Prostate gland (tissue), 2 donors: ENCODE measurements at regions of chr19 and their contacts with region 1.

Region 1: GRCh38 chr19:40716655-40717324 is at the starts of genes COQ8B and ITPKC:
- DNase-seq: peak; percentile 99
- H3K4me3 ChIP-seq: peak within 1 kb of the TSS; percentile 79 to 85
- H3K27ac ChIP-seq: peak within 1 kb of the TSS; percentile 99 to 100
- H3K4me1 ChIP-seq: no peaks in the 10 kb centered on the region
- H3K27me3 ChIP-seq: no peaks in the 10 kb centered on the region
- CTCF ChIP-seq: peak in 2 of 4 experiments; percentile 49 to 54
- POLR2A ChIP-seq: peak; percentile 92
- total RNA-seq, gene COQ8B: 61.2 to 64.4 TPM
- total RNA-seq, gene ITPKC: 40.8 to 44.5 TPM

Region 2: DNA sequence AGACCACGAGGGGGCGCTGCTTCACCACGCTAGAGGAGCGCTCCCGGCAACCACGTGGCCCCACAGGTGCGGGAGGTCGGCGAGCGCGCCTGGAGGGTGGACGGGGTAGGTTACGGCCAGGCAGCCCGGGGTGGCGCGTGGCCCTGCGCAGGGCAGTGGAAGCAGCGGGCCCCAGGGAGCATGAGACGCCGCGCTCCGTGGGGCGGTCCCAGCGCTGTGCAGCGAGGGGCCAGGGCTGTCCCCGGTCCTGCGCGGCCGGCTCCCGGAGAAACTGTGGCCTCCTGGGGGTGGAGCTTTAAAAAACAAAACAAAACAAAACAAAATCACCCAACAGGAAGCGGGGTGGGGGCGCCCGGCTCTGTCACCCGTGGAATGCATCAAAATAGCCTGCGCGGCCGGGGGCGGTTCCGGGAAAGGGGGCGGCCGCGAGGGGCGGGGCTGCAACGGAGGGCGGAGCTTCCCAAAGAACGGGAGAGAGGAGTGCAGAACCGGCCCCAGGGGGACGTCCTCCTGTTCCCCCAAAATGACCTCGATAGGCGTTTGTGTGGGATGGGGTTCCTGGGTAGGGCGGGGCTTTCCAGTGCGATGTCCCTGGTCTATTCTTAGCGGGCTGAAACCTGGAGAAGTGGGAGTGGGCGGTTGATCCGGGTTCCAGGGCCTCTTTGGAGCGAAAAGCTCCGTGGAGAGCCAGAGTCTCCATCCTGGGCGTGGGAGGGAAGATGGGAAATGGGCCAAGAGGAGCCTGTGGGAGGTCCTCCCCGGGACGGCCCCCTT is 53.7 kb before region 1 on chr19:
- intact Hi-C with region 1: no loop called
- DNase-seq: peak; percentile 88
- H3K4me3 ChIP-seq: peak overlapping the region; percentile 65 to 69
- H3K27ac ChIP-seq: peak overlapping the region; percentile 73 to 81
- H3K4me1 ChIP-seq: no peaks in the 10 kb centered on the region
- H3K27me3 ChIP-seq: no peaks in the 10 kb centered on the region
- CTCF ChIP-seq: peak in 3 of 4 experiments; percentile 99
- POLR2A ChIP-seq: peak; percentile 43

Region 3: GRCh38 chr19:40750059-40750873 is 33.5 kb after region 1 on chr19 and contains the start of gene ACTMAP:
- intact Hi-C with region 1: loop called (anchors 1 kb)
- DNase-seq: peak; percentile 100
- H3K4me3 ChIP-seq: peak within 1 kb of the TSS; percentile 71 to 80
- H3K27ac ChIP-seq: peak within 1 kb of the TSS; percentile 94 to 98
- H3K4me1 ChIP-seq: peaks cover 9% of the 10 kb centered on the region
- H3K27me3 ChIP-seq: no peaks in the 10 kb centered on the region
- CTCF ChIP-seq: peak in 1 of 4 experiments; percentile 37
- POLR2A ChIP-seq: peak; percentile 90
- total RNA-seq, gene ACTMAP: 4.4 to 25.2 TPM

Region 4: DNA sequence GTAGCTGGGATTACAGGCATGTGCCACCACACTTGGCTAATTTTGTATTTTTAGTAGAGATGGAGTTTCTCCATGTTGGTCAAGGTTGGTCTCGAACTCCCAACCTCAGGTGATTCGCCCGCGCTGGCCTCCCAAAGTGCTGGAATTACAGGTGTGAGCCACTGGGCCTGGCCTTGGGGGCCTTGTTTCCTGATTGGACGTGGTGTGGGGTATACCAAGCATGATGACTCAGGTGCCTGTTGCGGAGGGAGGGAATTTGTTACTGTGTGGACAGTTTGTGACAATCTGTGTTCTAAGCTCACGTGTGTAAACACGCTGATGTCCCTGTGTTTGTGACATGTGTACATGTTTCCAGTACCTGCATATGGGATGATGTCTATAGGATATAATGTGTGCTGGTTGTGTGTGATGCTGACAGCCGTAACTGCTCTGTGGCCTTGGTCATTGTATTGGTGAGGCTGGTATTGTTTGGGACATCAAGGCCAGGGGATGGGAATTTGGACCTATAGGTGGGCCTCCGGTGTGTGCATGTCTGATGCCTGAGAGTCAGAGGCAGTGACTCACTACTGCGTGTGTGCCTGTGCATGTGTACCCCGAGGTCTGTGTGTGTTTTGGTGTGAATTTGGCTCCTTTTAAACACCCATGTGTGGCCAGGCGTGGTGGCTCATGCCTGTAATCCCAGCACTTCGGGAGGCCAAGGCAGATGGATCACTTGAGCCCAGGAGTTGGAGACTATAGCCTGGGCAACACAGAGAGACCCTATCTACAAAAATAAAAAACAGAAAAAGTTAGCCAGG is 80.6 kb after region 1 on chr19:
- intact Hi-C with region 1: loop called (anchors 2 kb)
- DNase-seq: no peak
- H3K4me3 ChIP-seq: no peak overlapping the region
- H3K27ac ChIP-seq: peak overlapping the region; percentile 88 to 97
- H3K4me1 ChIP-seq: peaks cover 19% of the 10 kb centered on the region
- H3K27me3 ChIP-seq: no peaks in the 10 kb centered on the region
- CTCF ChIP-seq: no peak
- POLR2A ChIP-seq: no peak